T-cell (primary cell): ENCODE measurements at regions of chr17 and their contacts with region 1.

Region 1: DNA sequence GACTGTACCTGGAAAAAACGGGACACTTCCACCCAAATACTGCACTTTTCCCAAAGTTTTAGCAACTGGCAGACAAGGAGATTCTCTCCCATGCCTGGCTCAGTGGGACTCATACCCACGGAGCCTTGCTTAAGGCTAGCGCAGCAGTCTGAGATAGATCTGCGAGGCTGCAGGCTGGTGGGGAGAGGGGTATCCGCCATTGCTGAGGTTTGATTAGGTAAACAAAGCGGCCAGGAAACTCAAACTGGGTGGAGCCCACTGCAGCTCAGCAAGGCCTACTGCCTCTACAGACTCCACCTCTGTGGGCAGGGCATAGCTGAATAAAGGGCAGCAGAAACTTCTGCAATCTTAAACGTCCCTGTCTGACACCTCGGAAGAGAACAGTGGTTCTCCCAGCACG is 44.8 kb downstream of the UTP18 start:
- DNase-seq: no peak
- ATAC-seq: no peak
- H3K4me3 ChIP-seq: no peak overlapping the region
- H3K4me3 Mint-ChIP-seq: no peak overlapping the region
- H3K27ac ChIP-seq: no peak overlapping the region
- H3K27ac Mint-ChIP-seq: no peak overlapping the region
- H3K4me1 ChIP-seq: no peaks in the 10 kb centered on the region
- H3K4me1 Mint-ChIP-seq: no peaks in the 10 kb centered on the region
- H3K27me3 ChIP-seq: peaks cover 0 to 4% of the 10 kb centered on the region in 2 experiments
- H3K27me3 Mint-ChIP-seq: peaks cover 10 to 15% of the 10 kb centered on the region in 2 donors

Region 2: DNA sequence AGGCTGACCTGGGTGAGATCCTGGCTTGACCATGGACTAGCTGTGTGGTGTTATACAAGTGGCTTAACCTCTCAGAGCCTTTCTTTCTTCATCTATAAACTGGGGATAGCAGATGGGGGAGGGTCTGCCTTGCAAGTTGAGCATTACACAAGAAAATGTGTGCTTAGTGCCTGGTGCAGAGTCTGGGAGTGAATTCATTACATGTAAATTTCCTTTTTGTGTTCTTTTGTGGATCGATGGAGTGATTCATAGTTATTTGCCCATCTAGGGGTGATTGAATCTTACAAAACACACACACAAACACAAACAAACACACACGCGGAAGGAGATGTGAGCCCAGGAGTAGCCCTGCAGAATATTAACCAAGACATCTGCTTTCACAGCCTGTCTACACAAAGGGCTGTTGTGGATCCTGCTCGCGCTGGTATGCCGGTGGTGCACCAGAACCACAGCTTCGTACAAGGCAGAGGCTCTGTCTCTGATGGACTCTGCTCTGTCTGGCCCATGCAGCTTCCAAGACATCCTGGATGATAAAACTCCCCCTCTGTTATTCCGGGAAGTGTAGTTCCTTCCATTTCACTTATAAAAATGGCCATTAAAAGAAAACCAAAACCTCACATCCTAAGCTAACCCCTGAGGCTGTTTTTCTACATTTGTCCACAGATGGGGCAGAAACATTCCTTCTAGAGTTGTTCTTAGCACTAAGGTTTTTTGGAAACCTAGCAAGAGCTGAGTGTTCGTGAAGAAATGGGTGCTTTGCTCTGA is 41.2 kb after region 1 on chr17:
- CTCF ChIA-PET with region 1: no interaction called
- POLR2A ChIA-PET with region 1: no interaction called
- DNase-seq: no peak
- ATAC-seq: no peak
- H3K4me3 ChIP-seq: no peak overlapping the region
- H3K4me3 Mint-ChIP-seq: no peak overlapping the region
- H3K27ac ChIP-seq: no peak overlapping the region
- H3K27ac Mint-ChIP-seq: no peak overlapping the region
- H3K4me1 ChIP-seq: no peaks in the 10 kb centered on the region
- H3K4me1 Mint-ChIP-seq: no peaks in the 10 kb centered on the region
- H3K27me3 ChIP-seq: peaks cover 0 to 14% of the 10 kb centered on the region in 2 experiments
- H3K27me3 Mint-ChIP-seq: peaks cover 12 to 19% of the 10 kb centered on the region in 2 donors

Region 3: GRCh38 chr17:51540151-51540550 is 235.0 kb after region 1 on chr17:
- CTCF ChIA-PET with region 1: no interaction called
- POLR2A ChIA-PET with region 1: interaction called in 1 of 2 experiments, 14 read pairs
- DNase-seq: peak in 6 of 35 experiments; percentile 1 to 36 (median 6)
- ATAC-seq: peak in 3 of 4 experiments; percentile 62 to 77 (median 62)
- H3K4me3 ChIP-seq: no peak overlapping the region
- H3K4me3 Mint-ChIP-seq: no peak overlapping the region
- H3K27ac ChIP-seq: no peak overlapping the region
- H3K27ac Mint-ChIP-seq: peak overlapping the region; percentile 4 to 9
- H3K4me1 ChIP-seq: peaks cover 7 to 8% of the 10 kb centered on the region in 2 experiments
- H3K4me1 Mint-ChIP-seq: peaks cover 13 to 26% (median 18%) of the 10 kb centered on the region in 3 donors
- H3K27me3 ChIP-seq: peaks cover 0 to 7% of the 10 kb centered on the region in 2 experiments
- H3K27me3 Mint-ChIP-seq: no peaks in the 10 kb centered on the region